Naive thymus-derived CD4-positive, alpha-beta T cell (primary cell): ENCODE measurements at regions of chr12 and their contacts with region 1.

Region 1: GRCh38 chr12:113334786-113335540 is at the start of gene SLC8B1:
- DNase-seq: peak; percentile 68 to 96 (median 80)
- ATAC-seq: peak; percentile 100
- H3K4me3 ChIP-seq: peak within 1 kb of the TSS; percentile 86
- H3K4me3 Mint-ChIP-seq: peak within 1 kb of the TSS; percentile 92 to 100 (median 98)
- H3K27ac ChIP-seq: peak within 1 kb of the TSS; percentile 76
- H3K27ac Mint-ChIP-seq: peak within 1 kb of the TSS; percentile 88 to 96 (median 91)
- H3K4me1 ChIP-seq: peaks cover 14 to 18% of the 10 kb centered on the region in 2 donors
- H3K4me1 Mint-ChIP-seq: peaks cover 19 to 40% (median 34%) of the 10 kb centered on the region in 7 donors
- H3K27me3 ChIP-seq: no peaks in the 10 kb centered on the region
- H3K27me3 Mint-ChIP-seq: no peaks in the 10 kb centered on the region
- total RNA-seq, gene SLC8B1: 40.9 to 169 (median 140) TPM

Region 2: DNA sequence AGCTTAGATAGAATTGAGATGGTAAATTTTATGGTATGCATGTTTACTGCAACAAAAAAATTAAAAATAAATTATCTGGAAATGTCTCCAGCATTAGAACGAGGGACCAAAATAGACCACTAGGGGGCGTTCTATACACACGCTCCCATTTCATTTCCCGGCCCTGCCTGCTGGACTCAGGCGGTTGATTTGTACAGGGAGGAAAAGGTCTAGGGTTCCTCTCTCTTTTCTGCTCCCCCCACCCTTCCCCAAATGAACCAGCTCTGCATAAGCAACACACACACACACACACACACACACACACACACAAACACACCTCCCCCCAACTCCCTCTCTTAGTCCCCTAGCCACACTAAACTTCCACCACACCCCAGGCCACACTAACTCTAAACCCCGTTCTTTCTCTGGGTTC is 286.2 kb before region 1 on chr12:
- CTCF ChIA-PET with region 1: no interaction called
- POLR2A ChIA-PET with region 1: no interaction called
- intact Hi-C with region 1: loop called in 1 of 2 experiments (anchors 10 kb)
- DNase-seq: peak in 8 of 9 donors; percentile 48 to 74 (median 66)
- ATAC-seq: peak; percentile 89
- H3K4me3 ChIP-seq: no peak overlapping the region
- H3K4me3 Mint-ChIP-seq: peak overlapping the region in 3 of 10 donors; percentile 31 to 45 (median 43)
- H3K27ac ChIP-seq: no peak overlapping the region
- H3K27ac Mint-ChIP-seq: peak overlapping the region in 7 of 9 donors; percentile 13 to 81 (median 52)
- H3K4me1 ChIP-seq: peaks cover 0 to 15% of the 10 kb centered on the region in 2 donors
- H3K4me1 Mint-ChIP-seq: peaks cover 4 to 51% (median 47%) of the 10 kb centered on the region in 7 donors
- H3K27me3 ChIP-seq: no peaks in the 10 kb centered on the region
- H3K27me3 Mint-ChIP-seq: peaks cover 0 to 16% (median 0%) of the 10 kb centered on the region in 5 donors

Region 3: DNA sequence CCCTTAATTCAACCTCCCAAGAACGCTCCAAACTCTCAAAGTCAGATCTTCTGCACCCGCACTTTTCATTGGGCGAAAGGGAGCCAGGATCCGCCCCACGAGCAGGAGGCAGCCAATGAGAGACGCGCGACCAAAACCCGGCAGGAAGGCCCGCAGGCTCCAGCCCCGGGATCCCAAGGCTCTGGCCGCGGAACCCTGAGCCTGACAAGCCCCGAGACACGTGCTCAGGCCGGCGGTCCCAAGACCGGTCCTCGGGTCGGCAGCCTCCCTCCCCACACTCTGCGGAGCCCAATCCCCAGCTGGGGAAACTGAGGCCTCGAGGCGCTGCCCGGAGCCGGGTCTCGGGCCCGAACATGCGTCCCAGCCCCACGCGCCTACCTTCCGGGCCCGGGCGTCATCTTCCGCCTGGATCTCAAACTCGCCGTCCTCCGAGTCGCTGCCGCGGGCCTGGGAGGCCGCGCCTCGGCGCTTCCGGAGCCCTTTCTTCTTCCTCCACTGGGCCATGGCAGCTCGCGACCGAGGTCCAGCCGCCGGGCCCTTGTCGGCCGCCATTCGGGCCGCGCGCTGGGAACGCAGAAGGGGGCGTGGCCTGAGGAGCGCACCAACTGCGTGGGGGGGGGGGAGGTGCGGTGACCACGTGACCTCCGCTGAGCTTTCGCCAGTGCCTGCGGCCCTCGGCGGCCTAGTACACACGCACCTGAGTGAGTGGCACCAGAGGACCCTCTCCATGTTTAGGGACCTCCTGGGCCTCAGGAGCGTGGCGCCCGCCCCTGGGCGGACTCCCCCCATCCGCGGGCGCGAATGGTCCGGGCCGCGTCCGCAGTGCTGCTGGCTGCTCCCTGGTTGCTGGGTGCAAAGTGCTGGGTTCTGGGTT is 149.8 kb before region 1 on chr12 and contains the starts of genes DDX54 and RITA1:
- CTCF ChIA-PET with region 1: no interaction called
- POLR2A ChIA-PET with region 1: interaction called, 3 read pairs
- intact Hi-C with region 1: loop called (anchors 1 to 2 kb)
- DNase-seq: peak; percentile 85 to 95 (median 91)
- ATAC-seq: peak; percentile 88
- H3K4me3 ChIP-seq: peak within 1 kb of the TSS; percentile 77
- H3K4me3 Mint-ChIP-seq: peak within 1 kb of the TSS; percentile 92 to 99 (median 96)
- H3K27ac ChIP-seq: peak within 1 kb of the TSS; percentile 96
- H3K27ac Mint-ChIP-seq: peak within 1 kb of the TSS; percentile 91 to 98 (median 97)
- H3K4me1 ChIP-seq: peaks cover 20 to 32% of the 10 kb centered on the region in 2 donors
- H3K4me1 Mint-ChIP-seq: peaks cover 20 to 55% (median 33%) of the 10 kb centered on the region in 7 donors
- H3K27me3 ChIP-seq: no peaks in the 10 kb centered on the region
- H3K27me3 Mint-ChIP-seq: no peaks in the 10 kb centered on the region
- total RNA-seq, gene DDX54: 55.8 to 81.1 (median 76.7) TPM
- total RNA-seq, gene RITA1: 6.4 to 20.2 (median 14.1) TPM

Region 4: DNA sequence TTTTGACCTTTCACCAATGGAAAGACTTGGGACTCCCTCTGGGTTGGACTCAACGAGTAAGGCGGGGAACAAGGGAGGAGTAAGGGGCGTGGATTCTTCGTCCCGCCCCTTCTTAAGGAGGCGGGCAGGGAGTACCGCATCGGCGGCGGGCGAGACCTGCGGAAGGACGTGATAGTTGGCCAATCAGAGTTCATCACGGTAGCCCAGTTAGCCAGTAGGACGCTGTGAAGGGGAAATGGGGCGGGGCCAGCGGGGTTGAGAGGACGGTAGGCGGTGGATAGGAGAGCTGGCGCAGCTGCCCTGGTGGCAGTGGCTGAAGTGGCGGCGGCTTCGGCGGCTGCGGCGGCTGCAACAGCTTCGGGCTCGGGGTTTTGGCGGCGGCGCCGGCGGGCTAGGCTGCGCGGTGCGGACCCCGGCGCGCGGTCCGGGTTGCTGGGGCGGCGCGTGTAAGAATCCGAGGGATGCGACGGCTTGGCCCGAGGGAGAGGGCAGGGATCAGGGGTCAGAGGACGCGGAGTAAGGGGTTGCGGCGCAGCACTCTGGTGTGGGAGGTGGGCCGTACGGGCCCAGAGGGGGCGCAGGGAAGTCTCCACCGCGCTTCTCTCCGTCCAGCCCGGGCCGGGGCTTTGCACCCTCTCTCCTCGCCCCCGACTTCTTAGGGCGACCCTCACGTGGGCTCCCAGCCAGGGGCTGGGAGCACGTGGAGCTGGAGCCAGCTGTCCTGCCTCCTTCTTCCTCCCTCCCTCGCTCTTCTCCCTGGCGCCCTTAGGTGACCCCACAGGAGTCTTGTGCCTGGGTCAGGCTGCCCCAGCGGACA is 113.6 kb before region 1 on chr12 and contains the start of gene TPCN1:
- CTCF ChIA-PET with region 1: interaction called, 3 read pairs
- POLR2A ChIA-PET with region 1: interaction called, 4 read pairs
- intact Hi-C with region 1: loop called (anchors 1 kb)
- DNase-seq: peak; percentile 94 to 99 (median 99)
- ATAC-seq: peak; percentile 97
- H3K4me3 ChIP-seq: peak within 1 kb of the TSS; percentile 70
- H3K4me3 Mint-ChIP-seq: peak within 1 kb of the TSS; percentile 79 to 99 (median 92)
- H3K27ac ChIP-seq: peak within 1 kb of the TSS; percentile 83
- H3K27ac Mint-ChIP-seq: peak within 1 kb of the TSS; percentile 81 to 97 (median 92)
- H3K4me1 ChIP-seq: peaks cover 17 to 32% of the 10 kb centered on the region in 2 donors
- H3K4me1 Mint-ChIP-seq: peaks cover 24 to 49% (median 45%) of the 10 kb centered on the region in 7 donors
- H3K27me3 ChIP-seq: no peaks in the 10 kb centered on the region
- H3K27me3 Mint-ChIP-seq: no peaks in the 10 kb centered on the region
- total RNA-seq, gene TPCN1: 49.5 to 124 (median 107) TPM

Region 5: DNA sequence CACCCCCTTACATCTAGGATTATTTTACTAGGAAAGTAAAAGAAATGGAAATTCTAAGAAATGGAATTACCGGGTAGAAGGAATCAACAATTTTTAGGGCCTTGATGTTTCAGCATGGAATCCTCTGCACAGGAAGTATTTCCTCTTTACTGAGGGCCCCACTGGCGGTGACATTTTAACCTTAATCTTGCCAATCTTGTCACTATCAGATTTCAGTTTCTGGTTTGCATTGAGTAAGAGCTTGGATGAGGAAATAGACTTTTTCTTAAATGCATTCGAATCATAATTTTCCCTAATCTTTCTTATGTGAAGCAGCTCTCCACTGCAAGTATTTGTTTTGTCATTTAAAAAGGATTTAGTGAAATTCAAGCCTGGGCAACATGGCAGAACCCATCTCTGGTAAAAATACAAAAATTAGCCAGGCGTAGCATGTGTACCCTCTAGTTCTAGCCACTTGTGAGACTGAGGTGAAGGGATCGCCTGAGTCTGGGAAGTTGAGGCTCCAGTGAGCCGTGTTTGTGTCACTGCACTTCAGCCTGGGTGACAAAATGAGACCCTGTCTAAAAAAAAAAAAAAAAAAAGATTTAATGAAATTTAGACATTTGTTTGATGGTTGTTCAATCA is 73.0 kb before region 1 on chr12:
- CTCF ChIA-PET with region 1: no interaction called
- POLR2A ChIA-PET with region 1: no interaction called
- intact Hi-C with region 1: loop called in 1 of 2 experiments (anchors 2 kb)
- DNase-seq: peak in 8 of 9 donors; percentile 25 to 63 (median 52)
- ATAC-seq: peak; percentile 72
- H3K4me3 ChIP-seq: peak overlapping the region; percentile 37
- H3K4me3 Mint-ChIP-seq: peak overlapping the region; percentile 55 to 88 (median 76)
- H3K27ac ChIP-seq: peak overlapping the region; percentile 58
- H3K27ac Mint-ChIP-seq: peak overlapping the region; percentile 77 to 95 (median 91)
- H3K4me1 ChIP-seq: peaks cover 14 to 53% of the 10 kb centered on the region in 2 donors
- H3K4me1 Mint-ChIP-seq: peaks cover 27 to 76% (median 55%) of the 10 kb centered on the region in 7 donors
- H3K27me3 ChIP-seq: no peaks in the 10 kb centered on the region
- H3K27me3 Mint-ChIP-seq: no peaks in the 10 kb centered on the region

Region 6: GRCh38 chr12:113422030-113422885 is 87.3 kb after region 1 on chr12 and contains the start of gene SDSL:
- CTCF ChIA-PET with region 1: no interaction called
- POLR2A ChIA-PET with region 1: no interaction called
- intact Hi-C with region 1: loop called in 1 of 2 experiments (anchors 5 kb)
- DNase-seq: peak in 2 of 9 donors; percentile 11 to 38
- ATAC-seq: peak; percentile 91
- H3K4me3 ChIP-seq: no peak within 1 kb of the TSS
- H3K4me3 Mint-ChIP-seq: peak within 1 kb of the TSS in 5 of 10 donors; percentile 44 to 96 (median 89)
- H3K27ac ChIP-seq: no peak within 1 kb of the TSS
- H3K27ac Mint-ChIP-seq: peak within 1 kb of the TSS in 2 of 9 donors; percentile 58 to 91
- H3K4me1 ChIP-seq: no peaks in the 10 kb centered on the region
- H3K4me1 Mint-ChIP-seq: peaks cover 0 to 18% (median 7%) of the 10 kb centered on the region in 7 donors
- H3K27me3 ChIP-seq: no peaks in the 10 kb centered on the region
- H3K27me3 Mint-ChIP-seq: peaks cover 0 to 11% (median 0%) of the 10 kb centered on the region in 5 donors
- total RNA-seq, gene SDSL: 0.46 to 2.5 (median 1.7) TPM in 4 of 5 experiments, not detected in the other

Region 7: GRCh38 chr12:113664224-113664681 is 329.3 kb after region 1 on chr12:
- CTCF ChIA-PET with region 1: no interaction called
- POLR2A ChIA-PET with region 1: no interaction called
- intact Hi-C with region 1: no loop called
- DNase-seq: no peak
- ATAC-seq: no peak
- H3K4me3 ChIP-seq: no peak overlapping the region
- H3K4me3 Mint-ChIP-seq: no peak overlapping the region
- H3K27ac ChIP-seq: no peak overlapping the region
- H3K27ac Mint-ChIP-seq: no peak overlapping the region
- H3K4me1 ChIP-seq: no peaks in the 10 kb centered on the region
- H3K4me1 Mint-ChIP-seq: no peaks in the 10 kb centered on the region
- H3K27me3 ChIP-seq: no peaks in the 10 kb centered on the region
- H3K27me3 Mint-ChIP-seq: peaks cover 0 to 43% (median 26%) of the 10 kb centered on the region in 5 donors